Natural killer cell (primary cell): ENCODE measurements at regions of chr14 and their contacts with region 1.

Region 1: GRCh38 chr14:68788996-68789820 is 3.7 kb downstream of the ZFP36L1 start:
- DNase-seq: peak; percentile 79 to 93
- ATAC-seq: peak; percentile 52 to 71 (median 56)
- H3K4me3 ChIP-seq: peak overlapping the region; percentile 96
- H3K4me3 Mint-ChIP-seq: peak overlapping the region; percentile 98
- H3K27ac ChIP-seq: peak overlapping the region; percentile 49
- H3K27ac Mint-ChIP-seq: peak overlapping the region; percentile 99
- H3K4me1 ChIP-seq: peaks cover 61% of the 10 kb centered on the region
- H3K4me1 Mint-ChIP-seq: peaks cover 67 to 77% of the 10 kb centered on the region in 2 donors
- H3K27me3 ChIP-seq: no peaks in the 10 kb centered on the region
- H3K27me3 Mint-ChIP-seq: no peaks in the 10 kb centered on the region
- CTCF ChIP-seq: peak; percentile 80

Region 2: GRCh38 chr14:68248481-68249255 is 540.5 kb before region 1 on chr14:
- intact Hi-C with region 1: loop called (anchors 2 kb)
- DNase-seq: peak in 1 of 2 donors; percentile 80
- ATAC-seq: peak; percentile 73 to 80 (median 73)
- H3K4me3 ChIP-seq: no peak overlapping the region
- H3K4me3 Mint-ChIP-seq: no peak overlapping the region
- H3K27ac ChIP-seq: peak overlapping the region; percentile 38
- H3K27ac Mint-ChIP-seq: peak overlapping the region; percentile 51 to 66
- H3K4me1 ChIP-seq: peaks cover 9% of the 10 kb centered on the region
- H3K4me1 Mint-ChIP-seq: peaks cover 13 to 31% of the 10 kb centered on the region in 2 donors
- H3K27me3 ChIP-seq: no peaks in the 10 kb centered on the region
- H3K27me3 Mint-ChIP-seq: no peaks in the 10 kb centered on the region
- CTCF ChIP-seq: peak; percentile 74

Region 3: GRCh38 chr14:68349900-68350629 is 439.1 kb before region 1 on chr14:
- intact Hi-C with region 1: no loop called
- DNase-seq: no peak
- ATAC-seq: no peak
- H3K4me3 ChIP-seq: no peak overlapping the region
- H3K4me3 Mint-ChIP-seq: no peak overlapping the region
- H3K27ac ChIP-seq: no peak overlapping the region
- H3K27ac Mint-ChIP-seq: no peak overlapping the region
- H3K4me1 ChIP-seq: no peaks in the 10 kb centered on the region
- H3K4me1 Mint-ChIP-seq: peaks cover 0 to 17% of the 10 kb centered on the region in 2 donors
- H3K27me3 ChIP-seq: no peaks in the 10 kb centered on the region
- H3K27me3 Mint-ChIP-seq: peaks cover 0 to 2% of the 10 kb centered on the region in 2 donors
- CTCF ChIP-seq: no peak

Region 4: DNA sequence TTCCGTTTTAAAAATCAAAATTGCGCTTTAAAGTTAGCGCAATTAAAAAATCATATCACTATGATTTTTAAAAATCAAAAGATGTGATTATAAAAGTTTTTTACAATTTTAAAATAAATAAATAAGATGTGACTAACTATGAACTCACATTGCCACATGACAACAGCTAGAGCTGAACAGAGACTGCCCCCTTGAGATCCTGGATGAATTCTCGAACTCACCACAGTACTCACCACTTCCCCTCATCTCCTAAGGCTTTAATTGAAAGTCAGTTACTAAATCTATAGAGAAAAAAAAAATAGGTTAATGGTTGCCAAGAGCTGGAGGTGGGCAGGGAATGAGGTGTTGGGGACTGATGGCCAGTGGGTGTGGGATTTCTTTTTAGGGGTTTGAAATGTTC is 380.5 kb before region 1 on chr14:
- intact Hi-C with region 1: loop called (anchors 10 kb)
- DNase-seq: peak in 1 of 2 donors; percentile 61
- ATAC-seq: peak; percentile 58 to 82 (median 66)
- H3K4me3 ChIP-seq: no peak overlapping the region
- H3K4me3 Mint-ChIP-seq: no peak overlapping the region
- H3K27ac ChIP-seq: no peak overlapping the region
- H3K27ac Mint-ChIP-seq: peak overlapping the region; percentile 35 to 39
- H3K4me1 ChIP-seq: peaks cover 25% of the 10 kb centered on the region
- H3K4me1 Mint-ChIP-seq: peaks cover 36 to 37% of the 10 kb centered on the region in 2 donors
- H3K27me3 ChIP-seq: no peaks in the 10 kb centered on the region
- H3K27me3 Mint-ChIP-seq: no peaks in the 10 kb centered on the region
- CTCF ChIP-seq: no peak

Region 5: DNA sequence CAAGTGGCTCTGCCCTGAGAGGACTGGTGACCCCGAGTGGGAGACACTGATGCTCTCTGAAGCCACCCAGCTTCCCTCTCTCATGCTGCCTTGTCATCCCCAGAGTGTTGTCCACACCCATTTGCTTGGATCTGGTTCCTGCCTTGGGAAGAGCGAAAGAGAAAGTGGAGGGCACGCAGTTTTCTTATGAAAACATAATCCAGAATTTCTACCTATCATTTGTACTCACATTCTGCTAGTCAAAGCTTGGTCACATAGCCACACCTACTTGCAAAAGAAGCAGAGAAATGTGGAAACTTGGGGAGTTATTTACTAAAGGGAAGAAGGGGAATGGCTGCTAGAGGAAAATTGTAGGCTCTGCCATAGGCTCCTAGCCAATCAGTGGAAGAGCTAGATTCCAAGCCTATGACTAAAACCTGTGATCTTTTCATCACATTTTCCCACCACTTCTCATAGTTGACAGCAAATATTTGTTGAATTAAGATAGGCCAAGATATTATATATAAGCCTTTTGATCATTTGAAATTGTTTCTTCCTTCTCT is 322.6 kb before region 1 on chr14:
- intact Hi-C with region 1: loop called (anchors 10 kb)
- DNase-seq: no peak
- ATAC-seq: no peak
- H3K4me3 ChIP-seq: no peak overlapping the region
- H3K4me3 Mint-ChIP-seq: no peak overlapping the region
- H3K27ac ChIP-seq: no peak overlapping the region
- H3K27ac Mint-ChIP-seq: no peak overlapping the region
- H3K4me1 ChIP-seq: peaks cover 22% of the 10 kb centered on the region
- H3K4me1 Mint-ChIP-seq: peaks cover 19 to 21% of the 10 kb centered on the region in 2 donors
- H3K27me3 ChIP-seq: no peaks in the 10 kb centered on the region
- H3K27me3 Mint-ChIP-seq: no peaks in the 10 kb centered on the region
- CTCF ChIP-seq: no peak

Region 6: GRCh38 chr14:68718023-68718995 is 70.9 kb before region 1 on chr14:
- intact Hi-C with region 1: loop called (anchors 2 kb)
- DNase-seq: peak in 1 of 2 donors; percentile 37
- ATAC-seq: peak in 2 of 3 donors; percentile 22 to 44
- H3K4me3 ChIP-seq: no peak overlapping the region
- H3K4me3 Mint-ChIP-seq: no peak overlapping the region
- H3K27ac ChIP-seq: no peak overlapping the region
- H3K27ac Mint-ChIP-seq: no peak overlapping the region
- H3K4me1 ChIP-seq: peaks cover 10% of the 10 kb centered on the region
- H3K4me1 Mint-ChIP-seq: peaks cover 34 to 36% of the 10 kb centered on the region in 2 donors
- H3K27me3 ChIP-seq: no peaks in the 10 kb centered on the region
- H3K27me3 Mint-ChIP-seq: peaks cover 0 to 2% of the 10 kb centered on the region in 2 donors
- CTCF ChIP-seq: peak; percentile 16

Region 7: DNA sequence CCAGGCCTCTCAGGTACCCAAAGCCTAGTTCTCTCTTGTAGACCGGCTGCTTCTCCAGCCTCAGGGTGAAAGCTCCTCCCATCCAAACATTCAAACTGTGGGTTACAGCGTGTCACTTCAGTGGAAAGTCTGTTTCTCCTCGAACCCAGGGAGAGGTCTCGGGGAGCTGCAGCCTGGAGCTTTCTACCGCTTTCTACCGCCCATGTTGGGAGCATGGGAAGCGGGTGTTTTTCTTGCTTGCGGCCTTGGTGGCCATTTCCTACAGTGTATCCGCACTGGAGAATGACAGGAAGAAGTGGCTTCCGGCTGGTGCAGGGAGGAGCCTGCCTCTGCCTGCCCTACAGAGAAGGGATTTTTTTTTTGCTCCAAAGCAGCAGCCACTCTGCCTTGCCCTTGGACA is 17.6 kb before region 1 on chr14:
- intact Hi-C with region 1: no loop called
- DNase-seq: peak in 1 of 2 donors; percentile 57
- ATAC-seq: peak in 2 of 3 donors; percentile 54 to 68
- H3K4me3 ChIP-seq: no peak overlapping the region
- H3K4me3 Mint-ChIP-seq: peak overlapping the region; percentile 61
- H3K27ac ChIP-seq: no peak overlapping the region
- H3K27ac Mint-ChIP-seq: peak overlapping the region; percentile 31 to 76
- H3K4me1 ChIP-seq: peaks cover 33% of the 10 kb centered on the region
- H3K4me1 Mint-ChIP-seq: peaks cover 23 to 41% of the 10 kb centered on the region in 2 donors
- H3K27me3 ChIP-seq: no peaks in the 10 kb centered on the region
- H3K27me3 Mint-ChIP-seq: no peaks in the 10 kb centered on the region
- CTCF ChIP-seq: no peak